CD4-positive, alpha-beta T cell (primary cell): ENCODE measurements at regions of chr14 and their contacts with region 1.

Region 1: GRCh38 chr14:28298156-28298555 is 468.4 kb upstream of the FOXG1 start:
- DNase-seq: no peak
- ATAC-seq: no peak
- H3K4me3 ChIP-seq: no peak overlapping the region
- H3K4me3 Mint-ChIP-seq: no peak overlapping the region
- H3K27ac ChIP-seq: no peak overlapping the region
- H3K27ac Mint-ChIP-seq: no peak overlapping the region
- H3K4me1 ChIP-seq: no peaks in the 10 kb centered on the region
- H3K4me1 Mint-ChIP-seq: no peaks in the 10 kb centered on the region
- H3K27me3 ChIP-seq: no peaks in the 10 kb centered on the region
- H3K27me3 Mint-ChIP-seq: no peaks in the 10 kb centered on the region
- CTCF ChIP-seq: no peak

Region 2: GRCh38 chr14:28375295-28375694 is 77.1 kb after region 1 on chr14:
- CTCF ChIA-PET with region 1: no interaction called
- POLR2A ChIA-PET with region 1: no interaction called
- intact Hi-C with region 1: loop called in 1 of 2 experiments (anchors 2 kb)
- DNase-seq: no peak
- ATAC-seq: no peak
- H3K4me3 ChIP-seq: no peak overlapping the region
- H3K4me3 Mint-ChIP-seq: no peak overlapping the region
- H3K27ac ChIP-seq: no peak overlapping the region
- H3K27ac Mint-ChIP-seq: no peak overlapping the region
- H3K4me1 ChIP-seq: no peaks in the 10 kb centered on the region
- H3K4me1 Mint-ChIP-seq: no peaks in the 10 kb centered on the region
- H3K27me3 ChIP-seq: no peaks in the 10 kb centered on the region
- H3K27me3 Mint-ChIP-seq: no peaks in the 10 kb centered on the region
- CTCF ChIP-seq: no peak